ENCODE measurements at regions of chr6 and their contacts with region 1.

Region 1: DNA sequence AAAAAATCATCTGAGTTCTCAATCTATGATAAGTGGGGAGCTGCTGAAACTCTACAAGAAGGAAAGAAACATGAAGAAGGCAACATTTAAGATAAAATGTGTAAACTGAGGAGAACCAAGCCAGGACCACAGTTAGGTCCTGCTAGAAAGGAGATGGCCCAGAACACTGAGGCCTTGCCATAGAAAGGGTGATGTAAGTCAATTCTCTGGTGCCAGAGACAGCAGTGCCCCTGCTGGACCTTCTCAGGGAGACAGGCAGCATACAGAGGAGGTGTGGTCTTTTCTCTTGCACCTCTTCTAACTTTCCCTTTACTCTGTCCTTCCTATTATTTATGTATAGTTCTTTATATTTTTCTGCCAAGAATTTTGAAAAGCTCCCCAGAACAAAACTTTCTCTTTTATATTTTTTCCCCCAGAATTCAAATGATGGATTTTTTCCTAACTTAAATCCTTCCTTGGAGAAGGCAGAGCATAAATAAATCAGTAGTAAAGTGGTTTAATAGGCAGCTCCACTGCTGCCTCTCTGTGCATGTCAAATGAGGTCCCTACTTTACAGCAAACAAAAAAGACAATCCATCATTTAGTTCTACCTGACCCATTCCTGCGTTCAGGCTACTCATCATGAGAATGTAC is 9.0 kb downstream of the UQCC2 start:
- DNase-seq: no peak
- ATAC-seq: peak; percentile 60

Region 2: GRCh38 chr6:33585403-33586107 is 116.9 kb before region 1 on chr6:
- intact Hi-C with region 1: loop called (anchors 2 kb)
- DNase-seq: peak; percentile 90
- ATAC-seq: peak; percentile 71

Measured in Right ventricle myocardium superior (tissue), 1 donor.